Activated CD4-positive, alpha-beta memory T cell treated with anti-CD3 and anti-CD28 coated beads for 36 hours (primary cell): ENCODE measurements at regions of chr3 and their contacts with region 1.

Region 1: GRCh38 chr3:132722164-132723024 is at the start of gene NPHP3:
- DNase-seq: peak; percentile 98
- H3K4me3 Mint-ChIP-seq: peak within 1 kb of the TSS; percentile 84
- H3K27ac Mint-ChIP-seq: peak within 1 kb of the TSS; percentile 77
- H3K4me1 Mint-ChIP-seq: peaks cover 39% of the 10 kb centered on the region
- H3K27me3 Mint-ChIP-seq: no peaks in the 10 kb centered on the region
- total RNA-seq, gene NPHP3: 13.6 to 16.7 TPM

Region 2: DNA sequence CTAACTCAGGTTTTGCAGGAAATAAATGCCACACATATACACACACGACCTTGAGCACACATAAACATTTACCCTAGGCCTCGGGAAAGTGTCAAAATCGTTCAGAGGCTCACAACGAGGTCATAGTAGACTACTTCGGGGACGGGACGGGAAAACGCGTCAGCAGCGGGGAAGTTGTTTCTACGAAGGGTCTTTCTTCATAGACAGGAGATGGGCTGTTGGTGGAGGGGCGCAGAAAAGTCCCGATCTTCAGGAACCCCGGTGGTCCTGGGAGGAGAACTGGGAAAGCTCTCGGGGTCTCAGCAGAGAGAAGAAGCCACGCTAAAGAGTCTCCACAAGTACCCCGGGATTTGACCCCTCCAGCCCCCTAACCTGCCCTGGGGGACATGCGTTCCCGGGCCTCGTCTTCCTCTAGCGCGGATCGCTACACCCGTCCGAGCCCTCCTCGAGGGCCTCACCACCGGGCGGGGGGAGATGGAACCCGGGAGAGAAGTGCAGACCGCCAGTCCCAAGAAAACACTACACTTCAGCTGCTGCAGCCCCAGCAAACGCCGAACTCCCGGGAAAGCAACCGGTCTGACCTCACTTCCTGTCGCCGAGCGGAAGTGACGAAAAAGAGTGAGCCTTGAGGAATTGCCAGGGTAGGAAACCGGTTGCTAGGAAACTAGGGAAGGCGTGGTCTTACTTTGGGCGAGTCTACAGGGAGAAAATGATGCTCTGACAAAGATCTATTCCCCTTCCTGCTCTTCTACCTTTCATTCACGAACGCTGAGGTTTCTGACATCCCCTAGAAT is 1976.0 kb before region 1 on chr3 and contains the start of gene PIK3R4:
- CTCF ChIA-PET with region 1: no interaction called
- POLR2A ChIA-PET with region 1: no interaction called
- intact Hi-C with region 1: loop called (anchors 5 kb)
- DNase-seq: peak; percentile 96
- H3K4me3 Mint-ChIP-seq: peak within 1 kb of the TSS; percentile 81
- H3K27ac Mint-ChIP-seq: peak within 1 kb of the TSS; percentile 90
- H3K4me1 Mint-ChIP-seq: peaks cover 52% of the 10 kb centered on the region
- H3K27me3 Mint-ChIP-seq: no peaks in the 10 kb centered on the region
- total RNA-seq, gene PIK3R4: 28.3 to 28.5 TPM

Region 3: DNA sequence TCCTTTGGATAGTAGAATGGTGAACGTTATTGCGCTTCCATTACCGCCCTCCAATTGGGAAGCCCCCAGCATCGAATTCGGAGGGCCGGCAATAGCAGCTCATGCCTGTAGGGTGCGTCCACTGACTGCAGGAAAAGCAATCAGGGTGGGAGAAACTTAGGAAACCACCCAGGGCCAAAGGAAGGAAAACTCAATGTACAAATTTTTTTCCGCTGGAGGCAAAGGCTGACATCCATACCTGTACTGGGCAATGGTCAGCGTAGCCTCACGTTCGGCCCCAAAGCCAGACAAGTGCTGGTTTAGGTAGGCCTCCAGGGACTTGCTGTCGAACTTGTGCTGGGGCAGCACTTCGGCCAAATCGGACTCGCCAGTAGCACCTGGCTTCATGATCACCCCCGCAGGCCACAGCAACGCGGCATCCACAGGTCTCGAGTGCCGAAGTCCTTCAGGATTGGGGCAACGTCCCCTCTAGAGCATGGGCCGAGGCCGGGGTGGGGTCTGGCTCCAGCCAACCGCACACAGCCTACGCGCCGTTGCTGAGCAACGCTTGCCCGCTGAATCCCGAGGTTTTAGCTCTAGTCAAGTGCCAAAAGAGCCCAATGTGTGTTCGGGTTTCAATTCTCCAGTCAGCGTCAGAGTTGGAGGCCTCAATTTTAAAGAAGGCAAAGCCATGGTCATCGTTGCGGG is 62.9 kb before region 1 on chr3 and contains the start of gene ACAD11:
- CTCF ChIA-PET with region 1: interaction called, 4 read pairs
- POLR2A ChIA-PET with region 1: no interaction called
- intact Hi-C with region 1: loop called (anchors 1 kb)
- DNase-seq: peak; percentile 58
- H3K4me3 Mint-ChIP-seq: peak within 1 kb of the TSS; percentile 93
- H3K27ac Mint-ChIP-seq: peak within 1 kb of the TSS; percentile 88
- H3K4me1 Mint-ChIP-seq: peaks cover 44% of the 10 kb centered on the region
- H3K27me3 Mint-ChIP-seq: no peaks in the 10 kb centered on the region
- total RNA-seq, gene ACAD11: 11.2 to 13.8 TPM

Region 4: GRCh38 chr3:133384331-133385027 is 662.1 kb after region 1 on chr3:
- CTCF ChIA-PET with region 1: interaction called, 10 read pairs
- POLR2A ChIA-PET with region 1: no interaction called
- intact Hi-C with region 1: loop called (anchors 2 kb)
- DNase-seq: peak; percentile 51
- H3K4me3 Mint-ChIP-seq: no peak overlapping the region
- H3K27ac Mint-ChIP-seq: no peak overlapping the region
- H3K4me1 Mint-ChIP-seq: no peaks in the 10 kb centered on the region
- H3K27me3 Mint-ChIP-seq: no peaks in the 10 kb centered on the region

Region 5: GRCh38 chr3:133506215-133506901 is 784.0 kb after region 1 on chr3:
- CTCF ChIA-PET with region 1: no interaction called
- POLR2A ChIA-PET with region 1: no interaction called
- intact Hi-C with region 1: loop called (anchors 10 kb)
- DNase-seq: peak; percentile 46
- H3K4me3 Mint-ChIP-seq: peak overlapping the region; percentile 67
- H3K27ac Mint-ChIP-seq: peak overlapping the region; percentile 77
- H3K4me1 Mint-ChIP-seq: peaks cover 15% of the 10 kb centered on the region
- H3K27me3 Mint-ChIP-seq: no peaks in the 10 kb centered on the region

Region 6: DNA sequence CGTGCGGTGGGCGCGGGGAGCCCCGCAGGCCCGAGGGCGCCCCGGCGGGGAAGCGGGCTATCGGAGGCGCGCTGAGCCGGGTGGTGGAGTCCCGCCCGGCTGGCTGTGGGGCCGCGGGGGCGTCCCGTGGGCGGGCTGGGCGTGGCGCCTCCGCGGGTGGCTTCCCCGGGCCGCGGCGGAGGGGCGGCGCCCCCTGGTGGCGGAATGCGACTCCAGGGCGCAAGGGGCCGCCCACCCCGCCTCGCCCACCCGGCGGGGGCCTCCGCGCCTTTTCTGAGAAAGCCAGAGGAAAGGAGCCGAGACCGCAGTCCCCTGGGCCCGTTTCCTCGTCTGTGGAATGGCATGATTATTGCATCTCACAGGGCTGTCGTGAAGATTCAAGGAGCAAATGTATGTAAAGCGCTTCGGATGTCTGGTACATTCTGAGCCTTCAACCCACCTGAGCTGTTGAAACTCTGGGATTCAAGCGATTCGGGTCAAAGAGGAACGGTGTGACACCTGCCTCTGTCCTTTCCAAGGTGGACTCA is 1205.2 kb after region 1 on chr3:
- CTCF ChIA-PET with region 1: no interaction called
- POLR2A ChIA-PET with region 1: no interaction called
- intact Hi-C with region 1: loop called (anchors 5 kb)
- DNase-seq: peak; percentile 72
- H3K4me3 Mint-ChIP-seq: peak overlapping the region; percentile 38
- H3K27ac Mint-ChIP-seq: no peak overlapping the region
- H3K4me1 Mint-ChIP-seq: peaks cover 6% of the 10 kb centered on the region
- H3K27me3 Mint-ChIP-seq: peaks cover 10% of the 10 kb centered on the region